ENCODE measurements at regions of chr6 and their contacts with region 1.

Region 1: DNA sequence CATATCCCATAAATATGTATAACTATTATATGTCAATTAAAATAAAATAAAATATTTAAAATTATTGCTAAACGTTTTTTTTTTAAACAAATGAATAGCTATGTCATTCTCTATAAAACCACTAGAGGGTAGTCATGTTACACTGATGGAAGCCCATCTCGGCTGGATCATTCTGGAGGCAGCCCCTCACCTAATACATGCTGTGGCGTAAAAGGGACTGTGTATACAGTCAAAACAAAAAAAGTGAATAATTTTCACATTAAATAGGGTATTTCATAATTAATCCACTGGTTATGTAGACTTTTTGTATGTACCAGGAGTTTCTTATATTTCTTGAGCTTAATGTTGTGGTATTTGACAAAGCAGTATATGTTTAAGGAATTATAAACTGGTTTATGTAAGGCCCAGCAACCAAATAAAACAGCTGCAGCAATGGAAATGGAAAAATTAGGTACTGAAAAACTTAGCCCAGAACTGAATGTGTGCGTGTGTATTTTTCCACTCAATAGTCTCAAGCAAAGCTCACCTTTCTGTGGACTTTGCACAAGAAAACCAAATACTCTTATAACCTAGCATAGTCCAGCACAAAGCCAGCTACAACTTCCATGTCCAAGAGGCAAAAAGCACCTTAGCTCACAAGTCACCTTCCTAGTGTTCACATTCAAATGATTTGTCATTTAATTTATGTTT is 81.7 kb downstream of the COL9A1 start:
- DNase-seq: peak; percentile 28
- H3K4me3 Mint-ChIP-seq: no peak overlapping the region
- H3K27ac Mint-ChIP-seq: no peak overlapping the region
- H3K4me1 Mint-ChIP-seq: peaks cover 26% of the 10 kb centered on the region
- H3K27me3 Mint-ChIP-seq: peaks cover 13% of the 10 kb centered on the region
- CTCF ChIP-seq: peak; percentile 77

Region 2: DNA sequence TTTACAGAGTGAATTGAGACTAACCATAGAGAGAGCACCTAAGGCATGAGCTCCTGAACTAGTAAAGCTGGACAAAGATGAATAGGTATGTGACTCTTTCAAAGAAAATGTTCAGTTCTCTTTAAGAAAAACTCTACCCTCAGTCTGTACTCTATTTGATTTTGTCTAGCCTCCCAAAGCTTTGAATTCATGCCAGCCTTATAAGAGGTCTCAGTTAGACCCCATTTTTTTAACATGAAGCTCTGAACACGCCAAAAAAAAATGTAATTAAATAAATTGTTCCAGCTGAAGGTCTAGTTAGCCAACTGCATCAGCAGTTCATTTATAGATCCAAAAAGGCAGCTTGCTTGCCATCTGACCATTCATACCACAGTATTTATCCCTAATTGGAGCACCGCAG is 10.1 kb after region 1 on chr6:
- CTCF ChIA-PET with region 1: interaction called, 28 read pairs
- intact Hi-C with region 1: no loop called
- DNase-seq: no peak
- H3K4me3 Mint-ChIP-seq: no peak overlapping the region
- H3K27ac Mint-ChIP-seq: no peak overlapping the region
- H3K4me1 Mint-ChIP-seq: no peaks in the 10 kb centered on the region
- H3K27me3 Mint-ChIP-seq: no peaks in the 10 kb centered on the region
- CTCF ChIP-seq: no peak

Region 3: DNA sequence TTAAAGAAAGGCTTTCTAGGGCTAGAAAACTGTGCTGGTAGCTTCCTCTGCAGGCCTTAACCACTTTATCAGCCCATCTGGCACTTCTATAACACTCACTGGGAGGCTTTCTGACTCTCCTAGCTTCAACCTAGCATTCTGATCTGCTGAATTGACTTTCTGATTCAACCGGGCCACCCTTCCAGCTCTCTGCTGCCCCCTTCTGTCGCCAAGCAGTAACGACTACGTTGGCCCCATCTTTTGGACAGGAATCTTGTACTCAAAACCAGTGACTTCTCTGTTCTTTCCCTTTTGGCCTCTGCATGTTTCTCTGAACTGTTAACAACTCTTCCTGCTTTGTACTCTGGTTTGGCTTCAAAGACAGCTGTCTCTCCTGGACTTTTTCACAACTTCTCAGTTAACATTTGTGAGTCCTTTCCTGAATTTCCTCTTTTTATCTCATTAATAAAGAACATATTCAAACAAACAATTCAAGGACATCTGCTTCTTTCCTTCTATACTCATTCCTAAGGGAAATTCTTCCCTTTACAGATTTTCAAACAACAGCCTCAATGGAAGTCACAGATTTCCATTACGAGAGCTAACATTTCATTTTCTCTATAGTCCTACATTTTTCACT is 148.3 kb after region 1 on chr6:
- CTCF ChIA-PET with region 1: interaction called, 48 read pairs
- intact Hi-C with region 1: loop called (anchors 1 kb)
- DNase-seq: peak; percentile 86
- H3K4me3 Mint-ChIP-seq: no peak overlapping the region
- H3K27ac Mint-ChIP-seq: no peak overlapping the region
- H3K4me1 Mint-ChIP-seq: peaks cover 14% of the 10 kb centered on the region
- H3K27me3 Mint-ChIP-seq: peaks cover 40% of the 10 kb centered on the region
- CTCF ChIP-seq: peak; percentile 93

Region 4: GRCh38 chr6:70586114-70586513 is 364.9 kb after region 1 on chr6:
- CTCF ChIA-PET with region 1: no interaction called
- intact Hi-C with region 1: no loop called
- DNase-seq: no peak
- H3K4me3 Mint-ChIP-seq: no peak overlapping the region
- H3K27ac Mint-ChIP-seq: no peak overlapping the region
- H3K4me1 Mint-ChIP-seq: no peaks in the 10 kb centered on the region
- H3K27me3 Mint-ChIP-seq: no peaks in the 10 kb centered on the region
- CTCF ChIP-seq: no peak

Region 5: GRCh38 chr6:70884074-70884983 is 663.2 kb after region 1 on chr6:
- CTCF ChIA-PET with region 1: interaction called, 16 read pairs
- intact Hi-C with region 1: loop called (anchors 1 kb)
- DNase-seq: peak; percentile 80
- H3K4me3 Mint-ChIP-seq: no peak overlapping the region
- H3K27ac Mint-ChIP-seq: no peak overlapping the region
- H3K4me1 Mint-ChIP-seq: no peaks in the 10 kb centered on the region
- H3K27me3 Mint-ChIP-seq: peaks cover 46% of the 10 kb centered on the region
- CTCF ChIP-seq: peak; percentile 97

Region 6: DNA sequence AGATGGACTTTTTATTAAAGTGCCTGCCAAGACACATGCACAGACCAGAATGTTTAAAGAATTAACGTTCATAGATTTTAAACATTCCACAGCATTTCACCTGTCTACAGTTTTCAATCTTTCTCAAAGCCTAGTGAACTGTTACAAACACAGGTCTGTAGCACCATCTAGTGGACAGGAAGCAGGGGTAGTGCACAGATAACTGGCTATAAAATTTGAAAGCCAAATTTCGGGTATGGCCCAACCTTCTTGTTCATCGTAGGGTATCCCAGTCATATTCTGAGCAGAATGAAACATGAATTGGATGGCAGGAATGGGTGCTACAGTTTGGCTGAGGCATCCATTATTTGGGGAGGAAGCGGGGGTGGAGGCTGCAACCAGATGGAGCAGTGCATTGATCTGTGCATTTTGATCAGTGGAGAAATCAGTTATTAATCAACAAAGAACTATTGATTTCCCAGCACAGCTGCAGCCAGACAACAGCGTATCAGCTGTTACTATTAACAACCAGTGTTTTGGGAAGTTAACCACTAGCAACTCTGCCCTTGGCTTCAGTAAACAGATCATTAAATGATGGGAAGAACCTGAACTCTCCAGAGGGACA is 791.8 kb after region 1 on chr6:
- CTCF ChIA-PET with region 1: interaction called, 3 read pairs
- intact Hi-C with region 1: loop called (anchors 2 kb)
- DNase-seq: peak; percentile 50
- H3K4me3 Mint-ChIP-seq: no peak overlapping the region
- H3K27ac Mint-ChIP-seq: no peak overlapping the region
- H3K4me1 Mint-ChIP-seq: no peaks in the 10 kb centered on the region
- H3K27me3 Mint-ChIP-seq: peaks cover 33% of the 10 kb centered on the region
- CTCF ChIP-seq: peak; percentile 85